ENCODE measurements at regions of chr2 and their contacts with region 1.

Region 1: GRCh38 chr2:214809751-214810564 is 475 bp upstream of the BARD1 start:
- DNase-seq: peak; percentile 100
- H3K4me3 Mint-ChIP-seq: peak overlapping the region; percentile 92
- H3K27ac Mint-ChIP-seq: peak overlapping the region; percentile 30
- H3K4me1 Mint-ChIP-seq: peaks cover 45% of the 10 kb centered on the region
- H3K27me3 Mint-ChIP-seq: peaks cover 14% of the 10 kb centered on the region

Region 2: GRCh38 chr2:214679736-214680135 is 130.2 kb before region 1 on chr2:
- intact Hi-C with region 1: loop called (anchors 5 kb)
- DNase-seq: no peak
- H3K4me3 Mint-ChIP-seq: no peak overlapping the region
- H3K27ac Mint-ChIP-seq: no peak overlapping the region
- H3K4me1 Mint-ChIP-seq: peaks cover 18% of the 10 kb centered on the region
- H3K27me3 Mint-ChIP-seq: peaks cover 3% of the 10 kb centered on the region

Region 3: DNA sequence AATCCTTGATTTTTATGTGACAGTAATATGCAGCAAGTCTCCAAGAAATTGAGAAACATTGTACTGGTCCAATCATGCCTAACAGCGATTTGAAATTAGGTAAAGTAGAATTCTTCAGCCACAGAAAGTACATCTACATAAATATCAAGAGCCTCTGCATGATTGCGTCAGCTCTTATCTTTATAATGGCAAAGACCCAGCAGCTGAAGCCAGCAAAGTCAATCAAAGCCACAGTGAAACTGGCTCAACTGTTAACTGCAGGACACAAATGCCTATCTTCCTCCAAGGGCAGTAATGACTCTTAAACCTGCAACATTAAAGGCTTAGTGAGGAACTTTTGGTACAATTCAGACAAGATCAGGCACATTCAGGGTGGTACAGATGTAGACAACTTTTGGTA is 103.0 kb before region 1 on chr2:
- intact Hi-C with region 1: no loop called
- DNase-seq: no peak
- H3K4me3 Mint-ChIP-seq: no peak overlapping the region
- H3K27ac Mint-ChIP-seq: no peak overlapping the region
- H3K4me1 Mint-ChIP-seq: no peaks in the 10 kb centered on the region
- H3K27me3 Mint-ChIP-seq: peaks cover 17% of the 10 kb centered on the region

Region 4: GRCh38 chr2:214782671-214783070 is 27.3 kb before region 1 on chr2:
- intact Hi-C with region 1: loop called (anchors 2 kb)
- DNase-seq: no peak
- H3K4me3 Mint-ChIP-seq: no peak overlapping the region
- H3K27ac Mint-ChIP-seq: no peak overlapping the region
- H3K4me1 Mint-ChIP-seq: peaks cover 6% of the 10 kb centered on the region
- H3K27me3 Mint-ChIP-seq: no peaks in the 10 kb centered on the region

Region 5: GRCh38 chr2:215435809-215436704 is 626.1 kb after region 1 on chr2 and contains the start of gene FN1:
- intact Hi-C with region 1: loop called (anchors 5 kb)
- DNase-seq: peak; percentile 54
- H3K4me3 Mint-ChIP-seq: peak within 1 kb of the TSS; percentile 85
- H3K27ac Mint-ChIP-seq: peak within 1 kb of the TSS; percentile 7
- H3K4me1 Mint-ChIP-seq: peaks cover 11% of the 10 kb centered on the region
- H3K27me3 Mint-ChIP-seq: peaks cover 73% of the 10 kb centered on the region
- total RNA-seq, gene FN1: 1.6 and 2.7 TPM in 2 replicates

Region 6: GRCh38 chr2:216108967-216109921 is 1299.3 kb after region 1 on chr2 and contains the start of gene XRCC5:
- intact Hi-C with region 1: loop called (anchors 1 kb)
- DNase-seq: peak; percentile 95
- H3K4me3 Mint-ChIP-seq: peak within 1 kb of the TSS; percentile 99
- H3K27ac Mint-ChIP-seq: peak within 1 kb of the TSS; percentile 98
- H3K4me1 Mint-ChIP-seq: peaks cover 48% of the 10 kb centered on the region
- H3K27me3 Mint-ChIP-seq: no peaks in the 10 kb centered on the region
- total RNA-seq, gene XRCC5: 430 and 484 TPM in 2 replicates